ENCODE measurements at regions of chr6 and their contacts with region 1.

Region 1: DNA sequence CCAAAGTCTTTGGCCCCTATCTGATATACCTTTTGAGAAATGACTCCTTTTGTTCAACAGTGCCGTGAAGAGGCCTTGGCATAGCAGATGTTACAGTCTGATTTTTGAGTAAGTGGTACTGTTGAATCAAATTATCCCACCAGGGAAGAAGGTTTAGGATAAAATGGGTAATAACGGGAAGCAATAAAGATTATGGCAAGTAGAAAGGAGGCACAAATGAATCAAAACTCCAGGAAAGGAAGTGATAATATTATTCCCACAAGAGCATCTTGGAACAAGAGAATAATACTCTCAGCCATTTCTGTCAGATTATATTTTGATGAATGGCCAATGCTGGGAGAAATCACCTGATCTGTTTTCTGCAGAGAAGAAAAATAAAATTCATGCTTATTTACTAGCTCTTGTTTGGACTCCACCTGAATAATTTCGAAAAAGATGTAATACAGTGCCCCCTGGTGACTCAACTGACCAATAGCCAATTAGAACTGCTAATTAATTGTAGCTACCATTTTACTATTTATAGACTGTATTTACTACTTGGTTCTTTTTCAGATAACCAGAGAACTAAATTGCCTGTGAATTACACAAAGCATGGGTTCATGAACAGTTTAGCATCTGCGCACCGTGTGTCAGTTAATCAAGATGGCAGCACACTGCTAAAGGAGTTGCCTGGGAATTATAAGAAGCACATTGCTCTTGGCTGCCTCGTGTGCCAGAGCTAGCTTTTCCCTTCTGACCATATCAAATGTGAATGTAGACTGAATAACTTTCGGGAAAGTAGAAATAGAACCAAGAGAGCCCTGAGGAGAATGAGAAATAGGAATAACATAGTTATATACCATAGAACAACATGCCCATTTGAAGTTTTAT is 78.5 kb upstream of the TRDN start:
- DNase-seq: peak; percentile 28
- ATAC-seq: no peak
- H3K4me3 ChIP-seq: no peak overlapping the region
- H3K27ac ChIP-seq: no peak overlapping the region
- H3K4me1 ChIP-seq: no peaks in the 10 kb centered on the region
- H3K27me3 ChIP-seq: no peaks in the 10 kb centered on the region
- CTCF ChIP-seq: peak; percentile 59; the same call in 1 of the 2 replicates

Region 2: GRCh38 chr6:123393328-123393727 is 321.9 kb before region 1 on chr6:
- CTCF ChIA-PET with region 1: no interaction called
- POLR2A ChIA-PET with region 1: no interaction called
- intact Hi-C with region 1: loop called (anchors 1 kb)
- DNase-seq: peak; percentile 46
- ATAC-seq: no peak
- H3K4me3 ChIP-seq: no peak overlapping the region
- H3K27ac ChIP-seq: no peak overlapping the region
- H3K4me1 ChIP-seq: no peaks in the 10 kb centered on the region
- H3K27me3 ChIP-seq: peaks cover 5% of the 10 kb centered on the region; the same call in 1 of the 2 replicates
- CTCF ChIP-seq: peak; percentile 56

Region 3: DNA sequence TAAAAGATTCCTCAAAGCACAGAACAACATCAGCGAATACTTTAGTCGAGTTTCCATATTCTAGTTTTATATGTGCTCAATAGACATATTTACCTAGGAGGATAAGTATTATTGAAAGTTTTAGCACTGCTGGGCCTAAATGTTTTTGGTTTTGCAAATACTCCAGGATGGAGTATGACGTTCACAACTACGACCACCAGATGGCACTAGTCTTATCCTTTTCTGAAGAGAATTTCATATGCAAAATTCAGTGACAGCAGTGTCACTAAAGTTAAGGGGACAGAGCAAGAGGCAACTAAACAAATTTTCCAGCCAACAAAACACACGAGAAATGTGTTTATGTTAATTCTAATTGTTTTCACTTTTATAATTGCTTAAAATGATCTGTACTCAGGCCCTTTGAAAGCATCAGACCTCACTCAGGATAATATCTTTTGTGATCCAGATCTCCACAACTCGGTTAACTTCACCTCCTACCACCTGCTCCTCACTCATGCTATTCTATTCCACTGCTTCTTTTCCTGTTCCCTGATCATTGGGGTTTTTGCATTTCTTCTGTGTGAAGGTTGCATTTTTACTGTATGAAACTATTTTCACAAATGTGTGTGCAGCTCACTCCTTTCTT is 299.3 kb before region 1 on chr6:
- CTCF ChIA-PET with region 1: no interaction called
- POLR2A ChIA-PET with region 1: no interaction called
- intact Hi-C with region 1: loop called (anchors 5 kb)
- DNase-seq: peak; percentile 59
- ATAC-seq: no peak
- H3K4me3 ChIP-seq: no peak overlapping the region
- H3K27ac ChIP-seq: no peak overlapping the region
- H3K4me1 ChIP-seq: no peaks in the 10 kb centered on the region
- H3K27me3 ChIP-seq: peaks cover 5% of the 10 kb centered on the region; the same call in 1 of the 2 replicates
- CTCF ChIP-seq: peak; percentile 62